Activated CD4-positive, alpha-beta memory T cell treated with anti-CD3 and anti-CD28 coated beads for 36 hours (primary cell): ENCODE measurements at regions of chr14 and their contacts with region 1.

Region 1: DNA sequence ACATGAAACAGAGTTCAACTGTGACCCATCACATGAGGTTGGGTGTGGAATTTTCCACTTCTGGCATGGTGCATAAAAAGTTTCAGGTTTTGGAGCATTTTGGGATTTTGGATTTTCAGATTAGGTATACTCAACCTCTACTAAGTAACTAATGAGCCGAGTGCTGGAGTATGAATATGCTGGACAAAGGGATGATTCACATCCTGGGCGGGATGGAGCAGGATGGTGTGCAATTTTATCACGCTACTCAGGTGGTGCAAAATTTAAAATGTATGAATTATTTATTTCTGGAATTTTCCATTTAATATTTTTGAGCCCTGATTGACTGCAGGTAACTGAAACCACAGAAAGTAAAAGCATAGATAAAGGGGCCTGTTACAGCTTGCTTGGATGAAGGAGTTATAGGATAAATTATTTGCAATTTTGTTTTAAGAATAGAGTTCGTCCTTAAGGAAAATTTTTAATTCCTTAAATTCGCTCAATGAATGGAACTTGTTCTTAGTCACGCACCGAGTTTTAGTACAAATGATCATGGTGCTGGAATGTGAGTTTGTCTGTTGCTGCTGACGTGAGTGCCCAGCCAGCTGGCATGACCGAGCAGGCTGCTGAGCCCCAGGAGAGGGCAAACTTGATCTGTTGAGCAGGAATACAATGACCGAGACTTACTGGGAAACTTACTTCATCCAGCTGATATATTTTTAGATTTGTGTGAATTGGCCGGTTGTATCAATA is 176.3 kb downstream of the ESR2 start:
- DNase-seq: no peak
- H3K4me3 Mint-ChIP-seq: no peak overlapping the region
- H3K27ac Mint-ChIP-seq: no peak overlapping the region
- H3K4me1 Mint-ChIP-seq: peaks cover 8% of the 10 kb centered on the region
- H3K27me3 Mint-ChIP-seq: no peaks in the 10 kb centered on the region

Region 2: DNA sequence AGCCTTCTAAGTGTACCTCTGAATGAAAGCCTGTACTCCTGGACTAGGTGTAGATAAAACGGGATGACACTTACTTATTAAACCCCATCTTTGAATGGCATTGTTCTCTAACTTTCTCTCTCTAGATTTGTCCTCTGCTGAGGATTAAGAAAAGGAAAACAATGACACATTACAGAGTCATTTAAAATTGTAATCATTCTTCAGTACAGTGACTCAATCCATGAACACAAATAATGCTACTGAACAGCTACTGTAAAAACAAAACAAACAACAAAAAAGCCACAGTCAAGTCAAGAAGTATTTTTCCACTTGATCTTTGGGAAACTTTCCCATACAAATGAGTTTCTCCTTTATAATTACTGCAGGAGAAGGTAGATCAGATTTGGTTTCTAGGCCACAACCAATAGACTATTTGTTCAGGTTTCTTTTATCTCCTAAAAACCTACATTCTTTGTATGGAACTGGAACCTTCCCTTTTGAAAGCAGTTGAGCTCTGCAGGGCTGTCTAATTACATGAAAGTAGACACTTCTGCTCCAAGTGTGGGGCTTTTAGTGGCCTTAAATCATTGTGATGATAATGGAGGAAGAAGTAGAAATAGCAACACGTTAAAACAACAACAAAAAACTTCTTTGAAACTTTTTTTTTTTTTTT is 42.8 kb before region 1 on chr14:
- CTCF ChIA-PET with region 1: no interaction called
- POLR2A ChIA-PET with region 1: no interaction called
- intact Hi-C with region 1: loop called (anchors 1 kb)
- DNase-seq: no peak
- H3K4me3 Mint-ChIP-seq: no peak overlapping the region
- H3K27ac Mint-ChIP-seq: peak overlapping the region; percentile 28
- H3K4me1 Mint-ChIP-seq: peaks cover 10% of the 10 kb centered on the region
- H3K27me3 Mint-ChIP-seq: no peaks in the 10 kb centered on the region